ENCODE measurements at regions of chr19 and their contacts with region 1.

Region 1: DNA sequence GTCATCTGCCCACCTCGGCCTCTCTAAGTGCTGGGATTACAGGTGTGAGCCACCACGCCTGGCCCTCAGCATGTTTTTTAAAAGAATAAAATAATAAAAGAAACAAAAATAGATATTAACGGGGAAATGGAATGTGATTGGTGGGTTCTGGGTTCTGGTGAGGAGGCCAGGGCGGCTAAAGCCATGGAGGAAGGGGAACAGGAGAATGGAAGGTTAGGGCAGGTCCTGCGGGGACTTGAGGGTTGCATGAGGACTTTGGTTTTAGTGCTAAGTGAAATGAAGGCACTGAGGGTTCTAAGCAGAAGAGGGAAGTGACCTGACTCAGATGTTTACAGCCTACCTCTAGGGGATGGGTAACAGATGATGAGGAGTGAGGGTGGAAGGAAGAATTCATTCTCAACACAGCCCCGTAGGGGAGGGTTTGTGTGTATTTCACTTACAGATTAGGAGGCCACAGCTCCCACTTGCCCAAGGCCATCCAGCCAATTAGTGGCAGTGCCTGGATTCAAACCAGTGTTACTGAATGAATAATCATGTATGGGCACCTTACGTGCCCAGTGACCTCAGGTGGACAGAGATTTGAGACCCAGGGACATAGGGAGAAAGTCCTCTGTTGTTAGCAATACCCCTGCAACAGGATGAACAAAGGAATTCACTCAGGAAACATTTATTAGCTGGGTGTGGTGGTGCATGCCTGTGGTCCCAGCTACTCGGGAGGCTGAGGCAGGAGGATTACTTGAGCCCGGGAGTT is 6.7 kb upstream of the MRPL4 start:
- DNase-seq: no peak
- H3K4me3 Mint-ChIP-seq: no peak overlapping the region
- H3K27ac Mint-ChIP-seq: no peak overlapping the region
- H3K4me1 Mint-ChIP-seq: peaks cover 3% of the 10 kb centered on the region
- H3K27me3 Mint-ChIP-seq: no peaks in the 10 kb centered on the region

Region 2: DNA sequence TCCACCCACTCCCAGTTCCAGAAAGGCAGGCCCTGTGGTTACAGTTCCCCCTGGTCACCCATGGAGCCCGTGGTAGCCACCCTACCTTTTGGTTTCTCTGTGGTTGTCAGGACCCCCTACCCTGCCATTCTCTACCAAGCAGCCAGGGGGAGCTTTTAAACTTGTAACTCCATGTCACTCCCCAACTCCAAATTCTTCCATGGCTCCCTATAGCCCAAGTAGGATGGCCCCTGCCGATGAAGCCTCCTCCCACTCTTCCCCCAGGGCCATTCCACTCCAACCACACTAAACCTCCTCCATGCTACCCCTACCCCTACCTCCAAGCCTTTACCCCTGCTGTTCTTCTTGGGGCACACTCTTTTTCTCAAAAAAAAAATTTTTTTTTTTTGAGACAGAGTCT is 16.4 kb before region 1 on chr19:
- CTCF ChIA-PET with region 1: interaction called, 42 read pairs
- DNase-seq: peak; percentile 64
- H3K4me3 Mint-ChIP-seq: peak overlapping the region; percentile 67
- H3K27ac Mint-ChIP-seq: no peak overlapping the region
- H3K4me1 Mint-ChIP-seq: peaks cover 11% of the 10 kb centered on the region
- H3K27me3 Mint-ChIP-seq: peaks cover 26% of the 10 kb centered on the region

Region 3: DNA sequence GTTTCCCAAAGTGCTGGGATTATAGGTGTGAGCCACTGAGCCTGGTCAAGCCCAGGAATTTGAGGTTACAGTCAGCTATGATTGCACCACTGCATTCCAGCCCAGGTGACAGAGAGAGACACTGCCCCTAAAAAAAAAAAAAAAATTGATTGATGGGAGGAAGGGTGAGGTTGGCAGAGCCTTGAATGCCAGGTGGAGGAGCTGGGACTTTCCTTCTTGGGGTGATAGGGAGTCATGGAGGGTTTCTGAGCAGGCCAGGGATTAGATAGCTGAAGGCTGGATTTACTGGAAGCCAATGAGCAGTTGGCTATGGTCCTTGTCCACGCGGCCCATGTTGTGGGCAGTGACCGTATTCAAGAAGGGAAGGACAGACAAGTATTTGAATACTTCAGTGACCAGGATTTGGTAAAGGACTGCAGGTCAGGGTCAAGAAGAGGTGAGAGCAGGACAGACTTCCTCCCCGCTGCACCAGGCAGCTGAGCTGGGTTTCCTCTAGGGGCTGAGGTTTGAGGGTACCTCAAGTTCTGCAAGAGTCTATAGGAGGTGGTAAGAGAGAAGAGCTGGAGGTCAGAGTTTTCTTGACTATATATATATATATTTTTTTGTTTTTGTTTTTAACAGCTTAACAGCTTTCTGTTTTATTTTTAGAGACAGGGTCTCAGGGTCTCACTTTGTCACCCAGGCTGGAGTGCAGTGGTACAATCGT is 34.5 kb after region 1 on chr19:
- CTCF ChIA-PET with region 1: no interaction called
- DNase-seq: no peak
- H3K4me3 Mint-ChIP-seq: no peak overlapping the region
- H3K27ac Mint-ChIP-seq: peak overlapping the region; percentile 46
- H3K4me1 Mint-ChIP-seq: peaks cover 19% of the 10 kb centered on the region
- H3K27me3 Mint-ChIP-seq: no peaks in the 10 kb centered on the region

Measured in activated naive CD4-positive, alpha-beta T cell treated with anti-CD3 and anti-CD28 coated beads, Interleukin-2, amount 10 ng/mL, durations not matched to agents 7 days and 5 days (primary cell).